Ovary (tissue), 10 donors: ENCODE measurements at regions of chr6 and their contacts with region 1.

Region 1: DNA sequence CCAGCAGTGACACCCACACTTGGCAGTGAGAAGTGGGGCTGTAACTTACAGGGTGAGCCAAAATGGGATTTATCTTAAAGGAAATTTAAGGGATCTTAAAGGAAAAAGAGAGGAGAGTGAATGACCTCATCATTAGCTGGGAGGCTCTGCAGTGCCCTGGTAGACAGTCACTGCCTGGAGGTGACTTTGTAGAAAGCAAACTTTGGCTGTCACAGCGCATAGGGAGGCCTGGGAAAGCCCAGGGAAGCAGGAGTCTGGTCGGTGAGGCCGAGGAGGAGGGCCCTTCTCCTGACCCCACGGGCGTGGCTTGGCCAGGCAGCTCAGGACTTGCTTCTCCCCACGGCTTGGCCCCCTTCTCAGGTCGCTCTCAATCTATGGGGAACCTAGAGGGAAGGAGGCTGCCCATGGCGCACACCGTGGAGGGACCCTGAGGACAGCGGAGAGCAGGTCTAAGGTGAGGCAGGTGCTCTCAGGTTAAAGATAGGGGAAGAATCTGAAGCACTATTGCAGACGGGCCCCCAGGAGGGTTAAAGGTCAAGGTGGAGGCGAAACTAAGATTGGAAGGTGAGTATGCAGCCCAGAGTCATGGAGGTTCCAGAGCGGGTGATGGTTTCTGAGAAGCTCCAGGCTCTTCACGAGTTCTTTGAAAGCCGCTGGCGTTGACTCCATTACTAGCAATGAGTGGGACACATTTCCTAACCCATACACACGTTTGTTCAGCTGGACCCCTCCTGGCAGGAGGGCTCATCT is 15.6 kb upstream of the RIPK1 start:
- DNase-seq: no peak
- H3K4me3 ChIP-seq: no peak overlapping the region
- H3K27ac ChIP-seq: no peak overlapping the region
- H3K4me1 ChIP-seq: no peaks in the 10 kb centered on the region
- H3K27me3 ChIP-seq: no peaks in the 10 kb centered on the region
- CTCF ChIP-seq: no peak
- EP300 ChIP-seq: no peak
- POLR2A ChIP-seq: no peak

Region 2: GRCh38 chr6:2765166-2765895 is 287.3 kb before region 1 on chr6 and contains the start of gene WRNIP1:
- intact Hi-C with region 1: loop called in 1 of 4 experiments (anchors 10 kb)
- DNase-seq: peak; percentile 98 to 99 (median 99)
- H3K4me3 ChIP-seq: peak within 1 kb of the TSS; percentile 53
- H3K27ac ChIP-seq: peak within 1 kb of the TSS; percentile 70 to 95
- H3K4me1 ChIP-seq: peaks cover 11% of the 10 kb centered on the region
- H3K27me3 ChIP-seq: no peaks in the 10 kb centered on the region
- CTCF ChIP-seq: peak; percentile 64 to 94 (median 93)
- EP300 ChIP-seq: no peak
- POLR2A ChIP-seq: peak; percentile 60
- total RNA-seq, gene WRNIP1: 30.4 to 73.4 (median 34.6) TPM

Region 3: GRCh38 chr6:2841264-2842138 is 211.2 kb before region 1 on chr6 and contains the start of gene SERPINB1:
- intact Hi-C with region 1: loop called in 2 of 4 experiments (anchors 10 kb)
- DNase-seq: peak; percentile 75 to 83 (median 82)
- H3K4me3 ChIP-seq: peak within 1 kb of the TSS; percentile 69
- H3K27ac ChIP-seq: peak within 1 kb of the TSS; percentile 75 to 89
- H3K4me1 ChIP-seq: peaks cover 7% of the 10 kb centered on the region
- H3K27me3 ChIP-seq: no peaks in the 10 kb centered on the region
- CTCF ChIP-seq: no peak
- EP300 ChIP-seq: peak; percentile 84
- POLR2A ChIP-seq: peak; percentile 46
- total RNA-seq, gene SERPINB1: 13.5 to 38.1 (median 27.7) TPM

Region 4: DNA sequence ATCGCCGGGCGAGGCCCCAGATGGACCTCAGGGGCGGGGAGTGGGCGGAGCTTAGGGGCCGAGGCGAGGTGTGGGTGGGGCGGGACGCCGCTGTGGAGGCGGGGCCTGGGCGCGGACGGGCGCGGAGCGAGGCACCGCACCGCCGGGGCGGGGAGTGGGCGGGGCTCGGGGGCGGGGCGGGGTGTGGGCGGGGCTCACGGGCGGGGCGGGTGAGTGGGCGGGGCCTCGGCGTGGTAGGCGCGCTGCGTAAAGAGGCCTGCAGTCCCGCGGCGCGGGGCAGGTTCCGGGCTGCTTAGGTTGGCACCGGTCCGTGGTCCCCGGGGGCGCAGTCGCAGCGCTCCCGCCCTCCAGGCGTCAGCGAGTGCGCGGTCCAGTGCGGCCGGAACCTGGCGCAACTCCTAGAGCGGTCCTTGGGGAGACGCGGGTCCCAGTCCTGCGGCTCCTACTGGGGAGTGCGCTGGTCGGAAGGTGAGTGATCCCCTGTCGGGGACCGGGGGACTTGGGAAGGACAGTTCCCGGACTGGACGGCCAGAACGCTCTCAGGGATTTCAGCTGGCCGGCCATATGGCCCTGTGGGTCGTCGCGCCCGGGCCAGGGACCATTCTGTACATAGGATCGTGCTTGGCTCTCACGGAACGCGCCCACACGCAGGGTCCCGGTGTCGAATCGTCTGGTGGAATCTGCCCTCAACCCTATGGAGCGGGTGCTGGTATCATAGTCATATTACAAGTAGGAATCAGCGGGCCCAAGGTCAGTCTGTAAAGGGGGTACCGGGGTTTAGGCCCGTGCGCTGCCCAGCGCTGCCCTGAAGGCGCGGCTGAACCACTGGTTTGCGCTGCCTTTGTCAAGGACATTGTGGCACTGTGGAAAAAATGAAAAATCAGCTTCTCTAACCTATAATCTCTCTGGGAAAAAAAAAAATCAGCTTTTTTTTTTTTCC is 52.8 kb before region 1 on chr6 and contains the start of gene NQO2:
- intact Hi-C with region 1: loop called (anchors 2 to 5 kb)
- DNase-seq: peak; percentile 94 to 98 (median 97)
- H3K4me3 ChIP-seq: peak within 1 kb of the TSS; percentile 86
- H3K27ac ChIP-seq: peak within 1 kb of the TSS; percentile 51 to 68
- H3K4me1 ChIP-seq: peaks cover 2% of the 10 kb centered on the region
- H3K27me3 ChIP-seq: no peaks in the 10 kb centered on the region
- CTCF ChIP-seq: peak in 1 of 3 donors; percentile 24
- EP300 ChIP-seq: no peak
- POLR2A ChIP-seq: peak; percentile 86
- total RNA-seq, gene NQO2: 16.2 to 41.1 (median 26.8) TPM

Region 5: DNA sequence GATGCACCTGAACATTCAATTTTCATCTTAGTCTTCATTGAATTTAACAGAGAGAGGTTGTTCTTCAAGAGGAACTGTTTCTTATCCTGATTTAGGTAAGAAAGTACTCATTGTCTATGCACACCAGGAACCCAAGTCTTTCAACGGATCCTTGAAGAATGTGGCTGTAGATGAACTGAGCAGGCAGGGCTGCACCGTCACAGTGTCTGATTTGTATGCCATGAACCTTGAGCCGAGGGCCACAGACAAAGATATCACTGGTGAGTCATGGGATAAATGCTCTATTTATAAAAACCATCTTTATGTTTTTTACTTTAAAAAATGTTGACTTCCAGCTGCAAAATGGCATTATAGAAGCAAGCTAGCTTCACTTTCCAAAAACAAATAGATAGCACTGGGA is 42.7 kb before region 1 on chr6:
- intact Hi-C with region 1: no loop called
- DNase-seq: no peak
- H3K4me3 ChIP-seq: no peak overlapping the region
- H3K27ac ChIP-seq: no peak overlapping the region
- H3K4me1 ChIP-seq: no peaks in the 10 kb centered on the region
- H3K27me3 ChIP-seq: no peaks in the 10 kb centered on the region
- CTCF ChIP-seq: no peak
- EP300 ChIP-seq: no peak
- POLR2A ChIP-seq: no peak

Region 6: GRCh38 chr6:3026791-3027626 is 25.6 kb before region 1 on chr6:
- intact Hi-C with region 1: no loop called
- DNase-seq: no peak
- H3K4me3 ChIP-seq: no peak overlapping the region
- H3K27ac ChIP-seq: no peak overlapping the region
- H3K4me1 ChIP-seq: no peaks in the 10 kb centered on the region
- H3K27me3 ChIP-seq: no peaks in the 10 kb centered on the region
- CTCF ChIP-seq: no peak
- EP300 ChIP-seq: no peak
- POLR2A ChIP-seq: no peak

Region 7: DNA sequence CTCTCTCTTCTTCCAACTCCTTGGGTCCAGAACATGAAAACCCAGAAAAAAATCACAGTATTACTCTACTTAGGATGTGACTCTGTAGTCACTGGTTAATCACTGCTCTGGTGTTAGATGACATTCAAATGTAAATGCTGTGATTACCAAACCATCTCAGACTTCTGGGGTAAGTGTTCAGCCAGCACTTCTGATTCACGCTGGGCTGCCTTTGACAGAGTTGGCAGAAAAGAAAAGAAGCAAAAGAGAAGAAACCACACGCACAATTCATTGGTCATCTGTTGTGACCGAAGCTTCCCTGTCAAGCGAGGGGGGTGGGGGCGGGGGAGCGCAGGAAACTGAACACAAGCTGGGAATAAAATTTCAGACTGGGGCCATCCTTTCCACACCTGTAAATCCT is 288.8 kb after region 1 on chr6:
- intact Hi-C with region 1: no loop called
- DNase-seq: no peak
- H3K4me3 ChIP-seq: no peak overlapping the region
- H3K27ac ChIP-seq: no peak overlapping the region
- H3K4me1 ChIP-seq: no peaks in the 10 kb centered on the region
- H3K27me3 ChIP-seq: no peaks in the 10 kb centered on the region
- CTCF ChIP-seq: no peak
- EP300 ChIP-seq: no peak
- POLR2A ChIP-seq: no peak